ENCODE measurements at regions of chr2 and their contacts with region 1.

Region 1: GRCh38 chr2:5227062-5227699 is 465.0 kb upstream of the SOX11 start:
- DNase-seq: no peak
- H3K4me3 ChIP-seq: no peak overlapping the region
- H3K27ac ChIP-seq: no peak overlapping the region
- H3K4me1 ChIP-seq: no peaks in the 10 kb centered on the region
- H3K27me3 ChIP-seq: no peaks in the 10 kb centered on the region
- CTCF ChIP-seq: no peak
- EP300 ChIP-seq: no peak
- POLR2A ChIP-seq: no peak

Region 2: DNA sequence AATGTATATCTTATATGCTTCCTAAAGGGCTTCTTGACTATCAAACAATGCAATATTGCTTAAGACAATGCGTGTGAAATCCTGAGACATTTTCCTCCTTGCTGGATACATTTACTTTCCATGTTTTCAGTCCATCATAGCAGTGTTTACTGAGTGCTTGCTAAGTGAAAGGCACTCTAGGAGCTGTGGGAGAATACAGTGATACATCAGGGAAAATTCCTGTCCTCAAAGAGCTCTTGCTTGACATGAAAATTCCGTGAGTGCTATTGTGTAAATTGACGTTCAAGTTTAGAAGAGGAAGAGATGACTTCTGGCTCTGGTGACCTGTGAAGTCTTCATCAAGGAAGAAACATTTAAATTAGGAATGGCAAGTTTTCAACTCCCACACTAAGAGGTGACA is 15.6 kb after region 1 on chr2:
- intact Hi-C with region 1: loop called in 1 of 4 experiments (anchors 2 kb)
- DNase-seq: no peak
- H3K4me3 ChIP-seq: no peak overlapping the region
- H3K27ac ChIP-seq: no peak overlapping the region
- H3K4me1 ChIP-seq: no peaks in the 10 kb centered on the region
- H3K27me3 ChIP-seq: no peaks in the 10 kb centered on the region
- CTCF ChIP-seq: no peak
- EP300 ChIP-seq: no peak
- POLR2A ChIP-seq: no peak

Measured in ovary (tissue), 10 donors.